Activated naive CD8-positive, alpha-beta T cell treated with anti-CD3 and anti-CD28 coated beads, Interleukin-2, amount 10 ng/mL, durations not matched to agents 7 days and 5 days (primary cell): ENCODE measurements at regions of chr9 and their contacts with region 1.

Region 1: DNA sequence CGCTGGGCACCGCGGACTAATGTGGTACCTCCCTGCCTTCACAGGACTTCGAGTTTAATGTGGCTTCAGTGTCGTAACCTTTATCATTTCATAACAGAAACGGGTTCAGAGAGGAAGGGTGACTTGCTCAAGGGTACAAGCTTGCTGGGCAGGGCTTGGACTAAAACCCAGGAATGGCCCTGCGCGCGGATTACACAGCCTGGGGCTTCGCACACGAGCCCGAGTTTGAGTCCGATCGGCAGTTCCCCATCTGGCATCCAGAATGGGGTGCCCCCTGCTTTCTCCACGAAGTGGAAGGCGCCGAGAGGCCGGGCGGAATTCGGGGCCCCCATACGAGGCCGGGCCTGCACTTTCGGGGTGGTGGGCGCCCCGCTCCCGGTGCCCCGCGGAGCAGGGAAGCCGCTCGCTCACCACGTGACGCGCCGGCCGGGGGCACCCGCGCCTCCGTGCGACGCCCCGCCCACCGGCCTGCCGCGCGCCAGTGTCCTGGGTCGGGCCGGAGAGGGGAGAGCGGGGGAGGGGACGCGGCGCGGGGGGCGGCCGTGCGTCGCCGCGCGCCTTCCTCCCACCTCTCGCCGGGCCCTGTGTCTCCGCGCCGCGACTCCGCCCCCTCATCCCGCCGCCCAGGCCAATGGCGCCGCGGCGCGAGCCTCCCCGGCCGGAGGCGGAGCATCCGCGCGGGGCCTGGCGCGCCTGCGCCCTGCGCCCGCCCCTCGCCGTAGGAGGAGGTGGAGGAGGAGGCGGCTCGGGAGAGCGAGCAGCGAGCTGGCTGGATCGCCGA is at the start of gene SET:
- DNase-seq: peak; percentile 98
- ATAC-seq: peak; percentile 83
- H3K4me3 Mint-ChIP-seq: peak within 1 kb of the TSS; percentile 74
- H3K27ac Mint-ChIP-seq: peak within 1 kb of the TSS; percentile 96
- H3K4me1 Mint-ChIP-seq: peaks cover 56% of the 10 kb centered on the region
- H3K27me3 Mint-ChIP-seq: no peaks in the 10 kb centered on the region
- total RNA-seq, gene SET: 411 to 415 TPM

Region 2: GRCh38 chr9:128286440-128286839 is 402.3 kb before region 1 on chr9:
- POLR2A ChIA-PET with region 1: no interaction called
- DNase-seq: no peak
- ATAC-seq: no peak
- H3K4me3 Mint-ChIP-seq: no peak overlapping the region
- H3K27ac Mint-ChIP-seq: no peak overlapping the region
- H3K4me1 Mint-ChIP-seq: peaks cover 2% of the 10 kb centered on the region
- H3K27me3 Mint-ChIP-seq: no peaks in the 10 kb centered on the region

Region 3: DNA sequence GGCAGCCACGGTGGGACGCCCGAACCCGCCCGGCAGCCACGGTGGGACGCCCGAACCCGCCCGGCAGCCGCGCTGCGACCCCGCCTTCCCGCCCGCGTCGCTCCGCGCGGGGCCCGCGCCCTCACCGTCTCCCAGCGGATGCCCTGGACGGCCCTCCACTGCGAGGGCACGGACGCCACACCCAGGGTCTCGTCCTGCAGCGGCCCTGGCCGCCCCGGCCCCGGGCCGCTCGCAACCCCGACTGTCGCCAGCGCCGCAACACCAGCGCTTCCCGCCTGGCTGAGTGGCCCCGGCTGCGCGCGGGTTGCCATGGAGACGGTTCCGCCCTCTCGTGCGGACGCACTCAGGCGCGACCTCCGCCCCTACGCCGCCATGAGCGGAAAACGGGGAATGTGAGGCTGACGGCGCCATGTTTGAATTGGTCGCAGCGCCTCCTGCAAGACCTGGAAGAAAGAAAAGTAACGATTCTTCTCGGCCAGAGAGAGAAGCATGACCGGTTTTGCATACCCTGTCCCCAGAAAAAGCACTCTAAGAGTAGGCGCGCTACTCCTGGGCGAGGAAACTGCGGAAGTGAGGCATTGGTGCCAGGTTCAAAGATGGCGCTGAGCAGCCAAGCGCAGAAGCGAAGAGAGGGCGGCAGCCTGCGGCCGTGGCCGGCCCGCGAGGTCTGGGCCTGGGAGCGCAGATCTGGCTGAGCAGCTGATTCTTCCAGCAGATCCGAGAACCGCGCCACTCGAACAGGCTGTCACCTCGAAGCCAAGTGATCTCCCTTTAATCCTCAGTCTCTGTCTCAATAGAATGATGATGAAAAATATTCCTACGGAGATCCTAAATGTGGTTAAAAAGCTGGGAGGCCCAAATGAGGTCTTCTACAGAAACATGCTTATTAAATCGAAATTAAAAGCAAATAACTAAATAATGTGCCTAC is 32.0 kb before region 1 on chr9 and contains the start of gene DYNC2I2:
- POLR2A ChIA-PET with region 1: interaction called, 15 read pairs
- DNase-seq: peak; percentile 98
- ATAC-seq: peak; percentile 94
- H3K4me3 Mint-ChIP-seq: peak within 1 kb of the TSS; percentile 95
- H3K27ac Mint-ChIP-seq: peak within 1 kb of the TSS; percentile 100
- H3K4me1 Mint-ChIP-seq: peaks cover 10% of the 10 kb centered on the region
- H3K27me3 Mint-ChIP-seq: no peaks in the 10 kb centered on the region
- total RNA-seq, gene DYNC2I2: 37.7 to 40.4 TPM

Region 4: DNA sequence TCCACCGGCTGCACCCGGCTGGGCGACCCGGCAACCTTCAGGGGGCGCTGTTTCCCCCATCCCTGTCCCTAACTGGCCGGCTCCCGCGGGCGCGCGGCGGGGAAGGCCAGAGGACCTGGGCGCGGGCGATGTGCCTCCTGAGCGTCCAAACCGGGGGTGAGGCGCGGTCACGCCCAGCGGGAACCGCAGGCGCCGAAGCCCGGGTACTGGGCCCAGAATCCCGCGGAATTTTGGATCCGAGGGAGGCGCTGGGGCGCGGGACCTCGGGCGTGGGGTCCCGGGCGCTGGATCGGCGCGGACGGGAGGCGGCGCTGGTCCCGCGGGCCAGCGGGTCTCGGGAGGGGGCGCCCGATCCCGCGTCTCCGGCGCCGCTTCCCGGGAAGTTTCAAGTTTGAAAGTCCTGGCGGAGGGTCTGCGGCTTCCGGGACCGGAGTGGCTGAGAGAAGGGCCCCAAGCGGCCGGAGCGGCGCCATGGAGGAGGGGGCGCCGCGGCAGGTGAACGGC is 13.8 kb after region 1 on chr9 and contains the start of gene PKN3:
- POLR2A ChIA-PET with region 1: interaction called, 13 read pairs
- DNase-seq: peak; percentile 97
- ATAC-seq: peak; percentile 91
- H3K4me3 Mint-ChIP-seq: peak within 1 kb of the TSS; percentile 92
- H3K27ac Mint-ChIP-seq: peak within 1 kb of the TSS; percentile 81
- H3K4me1 Mint-ChIP-seq: peaks cover 10% of the 10 kb centered on the region
- H3K27me3 Mint-ChIP-seq: no peaks in the 10 kb centered on the region
- total RNA-seq, gene PKN3: 7.4 to 9.6 TPM

Region 5: GRCh38 chr9:128723866-128724743 is 35.4 kb after region 1 on chr9 and contains the start of gene ZDHHC12:
- POLR2A ChIA-PET with region 1: interaction called, 12 read pairs
- DNase-seq: peak; percentile 99
- ATAC-seq: peak; percentile 99
- H3K4me3 Mint-ChIP-seq: peak within 1 kb of the TSS; percentile 91
- H3K27ac Mint-ChIP-seq: peak within 1 kb of the TSS; percentile 89
- H3K4me1 Mint-ChIP-seq: peaks cover 32% of the 10 kb centered on the region
- H3K27me3 Mint-ChIP-seq: no peaks in the 10 kb centered on the region
- total RNA-seq, gene ZDHHC12: 64.1 to 68.9 TPM